Posterior vena cava (tissue), 2 donors: ENCODE measurements at regions of chr2 and their contacts with region 1.

Region 1: GRCh38 chr2:96868555-96869280 is 1.2 kb downstream of the SEMA4C start:
- DNase-seq: peak; percentile 97

Region 2: DNA sequence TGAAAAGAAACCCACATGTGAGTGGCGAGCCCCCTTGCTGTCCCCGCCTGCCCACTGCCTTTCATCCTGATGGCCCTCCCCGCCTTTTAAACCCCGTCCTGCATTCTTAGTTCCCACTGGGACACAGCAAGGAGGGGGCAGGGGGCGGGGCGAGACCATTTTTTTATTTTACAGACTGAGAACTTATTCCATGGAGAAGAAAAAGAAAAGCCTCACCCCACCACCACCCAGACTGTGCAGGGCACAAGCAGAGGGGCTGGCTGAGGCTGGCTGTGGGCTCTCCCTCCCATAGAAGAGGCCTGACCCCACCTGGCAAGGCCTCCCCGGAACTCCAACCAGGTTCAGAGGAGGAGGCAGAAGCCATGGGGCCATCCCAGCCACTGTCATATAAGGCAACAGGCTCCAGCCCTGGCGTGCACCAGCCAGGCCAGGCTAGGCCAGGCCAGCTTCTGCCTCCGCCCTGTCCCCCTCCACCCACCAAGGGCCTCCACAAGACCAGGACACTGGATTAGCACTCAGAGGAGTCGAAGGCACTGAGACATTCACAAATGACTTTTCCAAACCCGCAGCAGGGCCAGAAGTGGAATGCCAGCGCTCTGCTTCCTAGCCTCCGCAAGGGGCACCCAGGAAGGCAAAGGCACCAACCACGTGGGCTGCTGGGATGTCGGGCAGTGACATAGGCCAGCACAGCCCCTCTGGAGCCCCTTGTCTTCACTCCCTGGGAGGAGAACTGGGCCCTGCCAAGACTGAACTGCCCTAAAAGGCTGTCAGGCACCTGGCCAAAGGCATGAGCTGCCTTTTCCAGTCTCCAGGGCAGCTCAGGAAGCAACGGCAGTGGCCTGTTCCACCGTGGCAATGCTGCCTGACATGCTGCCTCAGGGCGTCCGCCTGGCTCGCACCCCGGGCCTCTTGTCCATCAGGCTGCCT is 38.7 kb after region 1 on chr2:
- intact Hi-C with region 1: loop called (anchors 5 kb)
- DNase-seq: peak; percentile 94

Region 3: GRCh38 chr2:98063291-98063854 is 1194.7 kb after region 1 on chr2:
- intact Hi-C with region 1: no loop called
- DNase-seq: no peak